Gastrocnemius medialis (tissue), 4 donors: ENCODE measurements at regions of chr12 and their contacts with region 1.

Region 1: DNA sequence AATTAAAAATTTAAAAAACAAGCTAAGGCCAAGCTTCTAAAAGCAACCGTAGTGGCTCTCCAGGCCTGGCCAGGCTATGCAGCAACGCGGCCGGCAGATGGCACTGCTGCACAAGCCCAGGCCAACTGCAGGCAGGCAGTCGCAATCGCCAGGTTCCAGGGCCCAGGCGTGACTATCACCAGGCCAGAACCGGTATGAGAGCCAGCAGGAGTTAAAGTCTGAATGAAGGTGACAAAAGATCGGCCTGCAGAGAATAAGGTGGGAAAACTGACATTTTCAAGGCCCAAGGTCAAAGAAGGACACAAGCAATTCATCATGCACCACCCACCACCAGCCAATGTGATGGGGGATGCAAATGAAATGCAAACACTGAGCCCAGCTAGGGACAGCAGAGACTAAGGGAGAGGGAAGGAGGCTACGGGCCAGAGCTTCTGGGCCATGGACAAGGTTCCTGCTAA is 43.6 kb upstream of the ANO2 start:
- DNase-seq: peak; percentile 22 to 48
- ATAC-seq: peak; percentile 74 to 85
- H3K4me3 ChIP-seq: no peak overlapping the region
- H3K27ac ChIP-seq: no peak overlapping the region
- H3K4me1 ChIP-seq: peaks cover 0 to 3% of the 10 kb centered on the region in 2 donors
- H3K27me3 ChIP-seq: no peaks in the 10 kb centered on the region
- CTCF ChIP-seq: peak; percentile 82 to 94 (median 86)
- POLR2A ChIP-seq: no peak

Region 2: GRCh38 chr12:6039894-6040568 is 51.3 kb after region 1 on chr12:
- in situ Hi-C with region 1: loop called in 3 of 4 experiments (anchors 5 to 10 kb)
- intact Hi-C with region 1: loop called (anchors 1 kb)
- DNase-seq: peak; percentile 12 to 19
- ATAC-seq: peak; percentile 81 to 83
- H3K4me3 ChIP-seq: no peak overlapping the region
- H3K27ac ChIP-seq: no peak overlapping the region
- H3K4me1 ChIP-seq: no peaks in the 10 kb centered on the region
- H3K27me3 ChIP-seq: no peaks in the 10 kb centered on the region
- CTCF ChIP-seq: peak; percentile 78 to 87 (median 83)
- POLR2A ChIP-seq: no peak

Region 3: DNA sequence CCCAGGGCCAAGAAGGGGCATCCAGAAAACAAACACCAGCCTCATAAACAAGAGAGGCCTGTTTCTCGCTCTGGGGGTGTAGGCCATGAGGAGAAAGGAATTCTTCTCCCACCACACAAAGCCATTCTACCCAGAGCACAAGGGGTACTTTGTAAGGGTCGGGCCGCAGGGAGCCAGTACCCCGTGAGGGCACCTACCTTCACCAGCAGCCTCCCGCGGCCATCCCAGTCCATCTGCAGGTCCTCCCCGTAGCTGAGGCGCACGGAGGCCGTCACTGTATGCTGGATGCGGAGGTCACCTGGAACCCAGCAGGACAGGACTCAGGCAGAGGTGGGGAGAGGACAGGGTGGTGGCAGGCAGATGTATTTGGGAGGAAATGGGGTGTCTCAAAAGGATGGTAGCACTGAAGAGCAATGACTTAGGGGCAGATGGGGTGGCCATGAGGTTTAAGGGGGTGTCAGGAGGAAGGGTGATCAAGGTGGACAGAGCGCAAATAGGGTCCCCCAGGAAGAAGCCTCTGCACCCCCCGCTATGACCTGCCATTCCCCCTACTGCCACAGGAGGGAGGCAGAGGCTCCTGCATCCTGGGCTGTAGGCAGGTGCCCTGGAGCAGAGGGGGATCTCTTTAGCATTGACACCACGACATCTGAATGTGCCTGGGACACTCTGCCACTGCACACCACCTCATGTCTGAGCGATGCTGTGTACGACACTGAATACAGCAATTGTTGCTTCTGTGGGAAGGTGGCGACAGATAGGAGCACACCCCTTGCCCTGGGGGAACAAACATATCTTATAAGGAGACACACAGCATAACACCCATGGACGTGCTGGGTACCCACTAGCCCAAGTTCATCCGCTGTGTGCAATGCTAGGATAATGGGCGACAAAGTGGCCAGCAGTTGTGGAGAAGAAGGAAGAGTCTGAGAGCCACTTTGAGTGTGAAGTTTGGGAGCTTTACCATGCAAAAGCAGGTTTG is 74.4 kb after region 1 on chr12:
- in situ Hi-C with region 1: no loop called
- intact Hi-C with region 1: no loop called
- DNase-seq: peak in 1 of 2 donors; percentile 15
- ATAC-seq: peak; percentile 45 to 54
- H3K4me3 ChIP-seq: no peak overlapping the region
- H3K27ac ChIP-seq: no peak overlapping the region
- H3K4me1 ChIP-seq: no peaks in the 10 kb centered on the region
- H3K27me3 ChIP-seq: no peaks in the 10 kb centered on the region
- CTCF ChIP-seq: peak; percentile 67 to 77 (median 75)
- POLR2A ChIP-seq: no peak

Region 4: GRCh38 chr12:6285063-6285477 is 296.4 kb after region 1 on chr12:
- in situ Hi-C with region 1: loop called (anchors 5 to 25 kb)
- intact Hi-C with region 1: loop called (anchors 1 kb)
- DNase-seq: peak; percentile 19 to 53
- ATAC-seq: peak; percentile 75 to 89
- H3K4me3 ChIP-seq: no peak overlapping the region
- H3K27ac ChIP-seq: no peak overlapping the region
- H3K4me1 ChIP-seq: peaks cover 0 to 4% of the 10 kb centered on the region in 2 donors
- H3K27me3 ChIP-seq: peaks cover 0 to 2% (median 0%) of the 10 kb centered on the region in 3 donors
- CTCF ChIP-seq: peak; percentile 88 to 95 (median 92)
- POLR2A ChIP-seq: no peak